ENCODE measurements at regions of chr3 and their contacts with region 1.

Region 1: DNA sequence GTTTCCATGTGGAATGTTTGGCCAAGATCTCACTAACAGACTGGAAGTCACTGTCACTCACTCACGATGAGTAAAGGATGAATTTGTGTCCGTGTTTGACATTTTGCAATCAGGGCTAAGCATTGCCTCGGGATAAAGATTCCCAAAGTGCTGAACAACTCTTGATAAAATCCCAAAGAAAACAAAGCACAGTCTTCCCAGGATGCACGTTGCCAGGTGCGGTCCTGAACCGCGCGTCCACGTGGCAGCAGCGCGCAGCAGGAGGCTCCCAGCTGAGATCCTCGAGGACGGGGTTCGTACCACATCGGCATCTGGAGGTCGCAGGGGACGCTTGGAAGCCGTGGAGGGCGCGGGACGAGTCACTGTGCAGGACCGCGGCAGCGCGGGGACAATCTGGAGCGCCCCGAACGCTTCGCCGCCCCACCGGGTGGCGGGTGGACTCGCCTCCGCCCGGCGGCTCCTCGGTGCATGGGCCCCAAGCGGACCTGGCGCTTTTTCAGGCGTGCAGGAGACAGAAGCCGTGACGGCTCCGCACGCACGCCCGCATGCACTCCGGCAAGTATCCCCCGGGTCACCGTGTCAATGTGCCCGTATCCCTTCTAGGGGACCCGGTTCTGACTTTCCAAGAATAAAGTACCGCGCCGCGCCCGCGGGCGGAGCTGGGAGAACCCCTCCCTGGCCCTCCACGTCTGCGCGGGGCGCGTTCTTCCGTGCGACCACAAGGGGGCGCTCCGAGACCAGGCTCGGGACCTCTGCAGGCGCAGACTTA is 17.7 kb downstream of the CPN2 start:
- DNase-seq: peak; percentile 90
- ATAC-seq: peak; percentile 98
- H3K4me3 Mint-ChIP-seq: peak overlapping the region; percentile 56
- H3K27ac Mint-ChIP-seq: no peak overlapping the region
- H3K4me1 Mint-ChIP-seq: peaks cover 11% of the 10 kb centered on the region
- H3K27me3 Mint-ChIP-seq: peaks cover 35% of the 10 kb centered on the region

Region 2: GRCh38 chr3:194322701-194323211 is 10.6 kb before region 1 on chr3:
- CTCF ChIA-PET with region 1: no interaction called
- DNase-seq: no peak
- ATAC-seq: no peak
- H3K4me3 Mint-ChIP-seq: no peak overlapping the region
- H3K27ac Mint-ChIP-seq: no peak overlapping the region
- H3K4me1 Mint-ChIP-seq: no peaks in the 10 kb centered on the region
- H3K27me3 Mint-ChIP-seq: peaks cover 40% of the 10 kb centered on the region

Region 3: DNA sequence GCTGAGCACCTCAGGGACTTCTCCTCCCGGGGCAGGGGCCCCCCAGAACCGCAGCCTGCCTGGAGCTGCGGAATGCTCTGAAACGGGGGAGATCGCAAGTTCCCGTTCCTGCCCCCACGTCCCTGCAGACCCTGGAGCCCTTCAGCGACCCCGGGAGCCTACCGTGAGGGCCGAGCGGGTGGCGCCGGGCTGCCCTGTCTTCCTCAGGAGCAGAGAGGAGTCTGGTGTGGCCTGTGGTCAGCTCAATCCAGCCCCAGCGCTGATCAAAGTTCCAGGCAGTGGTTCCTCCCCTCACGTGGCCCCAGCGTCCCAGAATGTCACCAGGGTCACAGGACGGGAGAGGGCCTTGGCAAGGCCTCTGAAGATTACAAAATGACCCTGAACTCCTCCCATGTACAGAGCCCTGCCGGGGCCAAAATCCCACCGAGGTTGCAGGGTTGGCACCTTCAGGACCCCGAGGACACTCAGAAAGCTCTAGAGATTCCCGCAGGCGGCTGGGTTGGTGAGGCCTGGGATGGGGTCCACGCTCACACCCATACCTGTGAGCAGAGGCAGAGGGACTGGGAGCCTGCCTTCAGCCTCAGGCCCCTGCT is 17.8 kb after region 1 on chr3 and contains the start of gene CPN2:
- CTCF ChIA-PET with region 1: no interaction called
- DNase-seq: no peak
- ATAC-seq: no peak
- H3K4me3 Mint-ChIP-seq: no peak within 1 kb of the TSS
- H3K27ac Mint-ChIP-seq: no peak within 1 kb of the TSS
- H3K4me1 Mint-ChIP-seq: no peaks in the 10 kb centered on the region
- H3K27me3 Mint-ChIP-seq: peaks cover 2% of the 10 kb centered on the region
- total RNA-seq, gene CPN2: not detected

Region 4: GRCh38 chr3:194395778-194396547 is 62.6 kb after region 1 on chr3:
- CTCF ChIA-PET with region 1: interaction called, 79 read pairs
- DNase-seq: peak; percentile 58
- ATAC-seq: peak; percentile 44
- H3K4me3 Mint-ChIP-seq: peak overlapping the region; percentile 39
- H3K27ac Mint-ChIP-seq: no peak overlapping the region
- H3K4me1 Mint-ChIP-seq: peaks cover 51% of the 10 kb centered on the region
- H3K27me3 Mint-ChIP-seq: peaks cover 61% of the 10 kb centered on the region

Region 5: GRCh38 chr3:194404365-194405140 is 71.2 kb after region 1 on chr3:
- CTCF ChIA-PET with region 1: interaction called, 79 read pairs
- DNase-seq: no peak
- ATAC-seq: no peak
- H3K4me3 Mint-ChIP-seq: no peak overlapping the region
- H3K27ac Mint-ChIP-seq: no peak overlapping the region
- H3K4me1 Mint-ChIP-seq: peaks cover 7% of the 10 kb centered on the region
- H3K27me3 Mint-ChIP-seq: peaks cover 5% of the 10 kb centered on the region